ENCODE measurements at regions of chr10 and their contacts with region 1.

Region 1: DNA sequence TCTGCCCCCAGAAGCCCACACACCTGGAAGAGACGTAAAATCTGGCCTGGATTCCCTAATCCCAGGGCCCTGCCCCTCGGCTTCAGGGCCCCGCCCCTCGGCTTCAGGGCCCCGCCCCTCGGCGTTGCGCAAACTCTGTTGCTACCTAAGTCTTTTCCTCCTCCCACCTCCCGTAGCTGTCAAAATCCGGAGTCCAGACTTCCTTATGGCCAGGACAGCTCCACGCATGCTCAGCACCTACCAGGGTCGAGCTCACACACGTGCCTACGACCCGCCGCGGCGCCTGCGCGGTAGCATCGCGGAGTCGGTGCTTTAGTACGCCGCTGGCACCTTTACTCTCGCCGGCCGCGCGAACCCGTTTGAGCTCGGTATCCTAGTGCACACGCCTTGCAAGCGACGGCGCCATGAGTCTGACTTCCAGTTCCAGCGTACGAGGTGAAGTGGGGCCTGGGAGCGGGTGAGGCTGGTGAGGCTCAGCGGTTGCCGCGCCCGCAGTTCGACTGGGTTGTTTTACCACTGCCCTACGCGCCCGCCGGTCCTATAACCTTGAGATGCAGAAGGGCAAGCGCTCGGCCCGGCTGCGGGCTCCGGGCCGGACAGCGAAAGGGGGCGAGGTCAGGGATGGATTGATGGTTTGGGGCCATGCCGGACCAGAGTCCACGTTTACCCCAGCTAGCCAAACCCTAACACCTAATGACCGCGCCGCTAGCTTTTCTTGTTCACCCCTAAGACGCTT is at the start of gene CISD1:
- DNase-seq: peak; percentile 100
- ATAC-seq: peak; percentile 66
- H3K4me3 ChIP-seq: peak within 1 kb of the TSS; percentile 89
- H3K27ac ChIP-seq: peak within 1 kb of the TSS; percentile 92
- H3K4me1 ChIP-seq: peaks cover 24% of the 10 kb centered on the region
- H3K27me3 ChIP-seq: no peaks in the 10 kb centered on the region
- CTCF ChIP-seq: no peak
- total RNA-seq, gene CISD1: 57.1 and 68.8 TPM in 2 replicates

Region 2: GRCh38 chr10:58177362-58177947 is 91.6 kb before region 1 on chr10:
- CTCF ChIA-PET with region 1: interaction called, 3 read pairs
- POLR2A ChIA-PET with region 1: interaction called, 3 read pairs
- intact Hi-C with region 1: loop called (anchors 1 kb)
- DNase-seq: peak; percentile 64
- ATAC-seq: peak; percentile 31; the same call in 1 of the 2 replicates
- H3K4me3 ChIP-seq: no peak overlapping the region
- H3K27ac ChIP-seq: no peak overlapping the region
- H3K4me1 ChIP-seq: peaks cover 6% of the 10 kb centered on the region
- H3K27me3 ChIP-seq: peaks cover 2% of the 10 kb centered on the region; the same call in 1 of the 2 replicates
- CTCF ChIP-seq: peak; percentile 94

Region 3: DNA sequence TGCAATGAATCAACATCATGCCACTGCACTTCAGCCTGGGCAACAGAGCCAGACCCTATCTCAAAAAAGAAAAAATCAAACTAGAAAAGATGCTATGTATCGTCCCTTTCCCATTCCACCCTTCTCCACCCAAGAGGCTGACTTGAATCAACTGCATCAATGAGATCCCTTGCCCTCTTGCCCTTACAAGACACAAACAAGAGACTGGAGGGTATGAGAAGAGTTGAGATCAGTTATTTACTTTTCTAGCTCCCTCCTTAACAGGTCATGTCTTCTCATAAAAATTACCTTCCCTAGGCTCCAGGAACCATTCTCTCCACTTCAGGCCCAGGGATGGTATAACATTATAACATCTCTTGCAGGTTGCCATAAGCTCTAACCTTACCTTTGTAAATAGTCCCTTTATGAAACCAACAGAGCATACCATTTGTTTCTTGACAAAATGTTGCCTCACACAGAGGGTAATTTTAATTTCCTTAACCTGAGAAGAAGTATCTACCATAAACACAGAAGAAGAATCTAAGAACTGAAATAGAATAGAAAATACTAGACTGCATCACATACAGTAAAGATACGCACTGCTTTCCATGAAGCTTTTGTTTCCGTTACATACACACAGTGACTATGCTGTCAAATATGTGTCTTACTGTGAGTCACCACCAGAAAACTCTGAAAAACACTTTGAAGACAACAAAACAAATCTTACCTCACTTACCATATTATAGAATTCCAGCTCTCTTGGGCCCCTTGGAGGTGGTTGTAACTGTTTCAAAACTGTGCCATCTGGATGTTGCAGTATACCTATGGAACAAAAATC is 31.8 kb before region 1 on chr10:
- CTCF ChIA-PET with region 1: no interaction called
- POLR2A ChIA-PET with region 1: interaction called, 7 read pairs
- intact Hi-C with region 1: loop called (anchors 2 kb)
- DNase-seq: peak; percentile 88
- ATAC-seq: peak; percentile 98
- H3K4me3 ChIP-seq: peak overlapping the region; percentile 5; the same call in 1 of the 2 replicates
- H3K27ac ChIP-seq: peak overlapping the region; percentile 31
- H3K4me1 ChIP-seq: peaks cover 39% of the 10 kb centered on the region
- H3K27me3 ChIP-seq: no peaks in the 10 kb centered on the region
- CTCF ChIP-seq: no peak

Region 4: DNA sequence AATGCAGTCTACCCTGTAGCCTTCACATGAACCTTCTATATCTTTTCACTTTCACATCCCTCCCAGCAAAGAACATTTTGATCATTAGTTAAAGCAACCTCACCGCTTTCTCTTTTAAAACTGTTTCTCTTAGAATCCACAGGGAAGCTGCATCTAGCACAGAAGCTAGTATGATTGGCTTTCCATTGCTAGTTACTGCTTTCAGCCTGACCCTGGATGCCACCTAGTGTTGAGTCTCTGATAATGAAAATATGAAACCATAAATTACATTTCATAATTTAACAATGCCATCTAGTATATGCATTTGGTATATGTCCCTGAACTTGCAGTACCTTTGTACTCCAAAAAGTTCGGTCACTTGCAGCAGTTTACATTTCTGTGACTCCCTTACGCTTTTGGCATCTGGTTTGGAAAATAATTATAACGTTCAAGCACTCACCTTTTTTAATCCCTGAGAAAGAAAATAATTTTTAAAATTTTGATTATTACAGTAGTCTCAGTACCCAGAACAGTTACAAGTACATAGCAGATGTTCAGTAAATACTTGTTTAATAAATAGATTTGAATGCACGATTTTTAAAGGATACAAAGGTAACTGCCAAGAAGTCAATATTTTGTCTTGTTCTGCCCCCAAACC is 22.6 kb after region 1 on chr10:
- CTCF ChIA-PET with region 1: interaction called, 12 read pairs
- POLR2A ChIA-PET with region 1: no interaction called
- intact Hi-C with region 1: loop called (anchors 1 kb)
- DNase-seq: peak; percentile 78
- ATAC-seq: peak; percentile 95
- H3K4me3 ChIP-seq: no peak overlapping the region
- H3K27ac ChIP-seq: no peak overlapping the region
- H3K4me1 ChIP-seq: no peaks in the 10 kb centered on the region
- H3K27me3 ChIP-seq: no peaks in the 10 kb centered on the region
- CTCF ChIP-seq: peak; percentile 98

Region 5: GRCh38 chr10:58334817-58335305 is 65.8 kb after region 1 on chr10 and contains the start of gene UBE2D1:
- CTCF ChIA-PET with region 1: no interaction called
- POLR2A ChIA-PET with region 1: interaction called, 3 read pairs
- intact Hi-C with region 1: loop called (anchors 2 kb)
- DNase-seq: peak; percentile 88
- ATAC-seq: peak; percentile 96
- H3K4me3 ChIP-seq: peak within 1 kb of the TSS; percentile 75
- H3K27ac ChIP-seq: peak within 1 kb of the TSS; percentile 8
- H3K4me1 ChIP-seq: peaks cover 15% of the 10 kb centered on the region
- H3K27me3 ChIP-seq: peaks cover 11% of the 10 kb centered on the region; the same call in 1 of the 2 replicates
- CTCF ChIP-seq: 0 out of 2 replicates have a peak, but pooled peaks have one; percentile 11
- total RNA-seq, gene UBE2D1: 13.6 and 13.8 TPM in 2 replicates

Region 6: GRCh38 chr10:58384999-58385783 is 116.2 kb after region 1 on chr10 and contains the start of gene TFAM:
- CTCF ChIA-PET with region 1: no interaction called
- POLR2A ChIA-PET with region 1: interaction called, 4 read pairs
- intact Hi-C with region 1: loop called (anchors 1 kb)
- DNase-seq: peak; percentile 95
- ATAC-seq: peak; percentile 87
- H3K4me3 ChIP-seq: peak within 1 kb of the TSS; percentile 87
- H3K27ac ChIP-seq: peak within 1 kb of the TSS; percentile 55
- H3K4me1 ChIP-seq: peaks cover 25% of the 10 kb centered on the region
- H3K27me3 ChIP-seq: no peaks in the 10 kb centered on the region
- CTCF ChIP-seq: peak; percentile 75
- total RNA-seq, gene TFAM: 96.8 and 121 TPM in 2 replicates

Region 7: DNA sequence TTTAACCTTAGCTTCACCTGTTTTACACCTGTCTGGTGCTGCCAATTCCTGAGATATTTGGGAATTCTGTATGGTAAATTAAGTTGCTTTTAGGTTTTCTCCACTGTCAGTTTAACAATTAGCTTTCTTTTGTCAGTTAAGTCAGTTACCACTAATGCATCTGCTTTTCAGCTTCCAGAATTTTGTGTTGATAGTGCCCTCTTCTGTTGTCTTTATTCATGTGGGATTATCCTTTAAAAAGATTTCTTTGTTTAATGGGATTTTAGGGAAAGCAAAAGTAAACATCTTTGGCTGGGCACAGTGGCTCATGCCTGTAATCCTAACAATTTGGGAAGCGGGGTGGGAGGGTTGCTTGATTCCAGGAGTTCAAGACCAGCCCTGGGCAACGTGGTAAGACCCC is 124.3 kb after region 1 on chr10:
- CTCF ChIA-PET with region 1: interaction called, 10 read pairs
- POLR2A ChIA-PET with region 1: no interaction called
- intact Hi-C with region 1: no loop called
- DNase-seq: peak; percentile 30
- ATAC-seq: peak; percentile 71
- H3K4me3 ChIP-seq: no peak overlapping the region
- H3K27ac ChIP-seq: no peak overlapping the region
- H3K4me1 ChIP-seq: no peaks in the 10 kb centered on the region
- H3K27me3 ChIP-seq: no peaks in the 10 kb centered on the region
- CTCF ChIP-seq: peak; percentile 45; the same call in 1 of the 2 replicates

Measured in PC-3 (cell line).